AG04449 (cell line): ENCODE measurements at regions of chr15 and their contacts with region 1.

Region 1: GRCh38 chr15:38563723-38564519 is 693 bp downstream of the RASGRP1 start:
- DNase-seq: no peak
- H3K4me3 ChIP-seq: peak overlapping the region; percentile 64
- CTCF ChIP-seq: peak; percentile 97

Region 2: DNA sequence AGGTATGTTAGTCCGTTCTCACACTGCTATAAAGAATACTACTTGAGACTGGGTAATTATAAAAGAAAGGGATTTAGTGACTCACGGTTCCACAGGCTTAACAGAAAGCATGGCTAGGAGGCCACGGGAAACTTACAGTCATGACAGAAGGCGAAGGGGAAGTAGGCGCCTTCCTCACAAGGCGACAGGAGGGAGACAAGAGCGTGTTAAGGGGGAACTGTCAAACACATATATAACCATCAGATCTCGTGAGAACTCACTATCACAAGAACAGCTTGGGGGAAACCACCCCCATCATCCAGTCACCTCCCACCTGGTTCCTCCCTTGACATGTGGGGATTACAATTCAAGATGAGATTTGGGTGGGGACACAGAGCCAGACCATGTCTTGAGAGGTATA is 280.9 kb before region 1 on chr15:
- CTCF ChIA-PET with region 1: no interaction called
- POLR2A ChIA-PET with region 1: no interaction called
- DNase-seq: no peak
- H3K4me3 ChIP-seq: no peak overlapping the region
- CTCF ChIP-seq: no peak

Region 3: GRCh38 chr15:38414357-38414756 is 149.6 kb before region 1 on chr15:
- CTCF ChIA-PET with region 1: no interaction called
- POLR2A ChIA-PET with region 1: no interaction called
- DNase-seq: peak; percentile 12
- H3K4me3 ChIP-seq: no peak overlapping the region
- CTCF ChIP-seq: peak; percentile 84

Region 4: DNA sequence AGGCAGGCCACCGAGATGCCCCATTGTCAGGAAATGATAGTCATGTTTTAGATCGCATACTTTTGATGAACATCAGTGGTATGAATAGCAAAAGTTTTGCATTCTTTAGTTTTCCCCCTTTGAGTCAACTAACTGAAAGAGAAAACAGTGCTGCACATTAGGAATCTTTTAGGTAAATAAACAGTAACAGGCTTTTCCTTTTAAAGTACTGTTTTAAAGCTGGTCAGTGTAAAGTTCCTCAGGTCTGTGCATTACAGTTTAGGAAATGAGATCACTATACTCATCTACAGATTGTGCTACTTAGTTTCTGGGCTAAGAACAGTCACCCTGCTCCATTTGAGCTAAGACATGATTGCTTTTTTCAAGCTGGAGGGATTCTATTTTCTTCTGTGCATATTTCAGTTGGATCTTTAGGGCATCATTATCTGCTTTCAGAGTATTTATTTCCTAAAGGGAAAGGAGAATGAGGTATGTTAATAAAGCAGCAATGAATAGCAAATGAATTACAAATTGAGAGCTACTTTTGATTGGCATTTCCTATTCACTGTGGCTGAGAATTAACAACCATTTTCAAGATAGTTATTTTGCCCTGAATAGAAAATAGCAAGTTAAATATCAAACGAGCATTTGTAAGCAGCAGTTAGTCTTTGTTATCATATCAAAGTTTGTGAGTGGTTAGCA is 73.5 kb before region 1 on chr15:
- CTCF ChIA-PET with region 1: interaction called, 18 read pairs
- POLR2A ChIA-PET with region 1: interaction called, 3 read pairs
- DNase-seq: peak; percentile 80
- H3K4me3 ChIP-seq: no peak overlapping the region
- CTCF ChIP-seq: no peak

Region 5: DNA sequence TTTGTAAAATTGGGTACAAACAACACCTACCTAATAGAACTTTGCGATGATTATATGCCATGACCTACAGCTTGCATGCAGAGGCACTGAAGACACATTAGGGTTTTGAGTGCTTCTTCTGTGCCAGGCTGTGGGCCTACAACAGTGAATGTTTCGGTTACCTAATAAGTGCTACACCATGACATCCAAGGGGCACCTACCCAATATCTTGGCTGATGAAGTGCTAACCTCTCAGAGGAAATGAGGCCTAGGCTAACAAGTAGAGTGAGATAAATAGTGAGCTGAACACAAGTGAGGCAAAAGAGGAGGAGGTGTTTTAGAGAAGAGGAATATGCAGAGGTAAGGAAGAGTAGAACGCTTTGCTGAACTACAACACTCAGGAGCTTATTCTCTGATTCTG is 12.9 kb after region 1 on chr15:
- CTCF ChIA-PET with region 1: interaction called, 30 read pairs
- POLR2A ChIA-PET with region 1: no interaction called
- DNase-seq: no peak
- H3K4me3 ChIP-seq: no peak overlapping the region
- CTCF ChIP-seq: no peak

Region 6: GRCh38 chr15:38647683-38648082 is 83.8 kb after region 1 on chr15:
- CTCF ChIA-PET with region 1: interaction called, 28 read pairs
- POLR2A ChIA-PET with region 1: no interaction called
- DNase-seq: no peak
- H3K4me3 ChIP-seq: no peak overlapping the region
- CTCF ChIP-seq: peak; percentile 27

Region 7: DNA sequence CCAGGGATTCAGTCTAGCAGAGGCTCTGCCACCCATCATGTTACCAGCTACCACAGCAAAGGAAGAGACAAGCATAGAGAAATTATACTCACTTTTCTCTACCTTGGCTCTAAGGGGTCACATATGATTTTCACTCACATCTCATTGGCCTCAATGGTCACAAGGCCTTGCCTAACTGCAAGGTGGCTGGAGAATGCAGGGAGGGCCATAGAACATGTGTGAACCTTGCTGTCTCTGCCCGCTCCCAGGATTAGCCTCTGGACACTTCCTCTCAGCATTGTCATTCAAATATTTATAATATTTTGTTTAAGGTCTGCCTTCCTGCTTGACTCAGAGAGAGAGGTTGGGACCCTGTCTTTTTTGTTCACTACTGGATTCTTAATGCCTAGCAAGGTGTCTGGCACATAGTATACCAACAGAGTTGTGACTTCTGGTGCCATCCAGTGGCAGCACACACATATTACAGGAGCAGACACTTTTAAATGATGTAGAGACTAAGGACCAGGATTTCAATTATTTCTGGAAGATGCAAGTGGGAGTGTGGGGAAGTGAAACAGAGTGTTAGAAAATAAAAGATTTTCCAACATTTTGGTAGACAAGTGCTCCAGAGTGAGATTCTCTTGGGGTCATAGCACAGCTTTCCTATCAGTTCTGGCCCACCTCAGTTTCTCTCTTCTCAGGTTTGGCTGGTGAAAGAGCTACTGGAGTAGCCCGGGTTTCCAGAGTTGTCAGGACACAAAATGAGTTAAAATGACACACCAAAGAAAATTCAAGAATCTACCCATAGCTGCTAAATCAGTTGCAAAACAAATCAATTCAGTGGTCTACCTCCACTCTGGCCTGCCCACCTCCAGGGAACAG is 119.7 kb after region 1 on chr15:
- CTCF ChIA-PET with region 1: interaction called, 40 read pairs
- POLR2A ChIA-PET with region 1: interaction called, 3 read pairs
- DNase-seq: no peak
- H3K4me3 ChIP-seq: no peak overlapping the region
- CTCF ChIP-seq: peak; percentile 65

Region 8: DNA sequence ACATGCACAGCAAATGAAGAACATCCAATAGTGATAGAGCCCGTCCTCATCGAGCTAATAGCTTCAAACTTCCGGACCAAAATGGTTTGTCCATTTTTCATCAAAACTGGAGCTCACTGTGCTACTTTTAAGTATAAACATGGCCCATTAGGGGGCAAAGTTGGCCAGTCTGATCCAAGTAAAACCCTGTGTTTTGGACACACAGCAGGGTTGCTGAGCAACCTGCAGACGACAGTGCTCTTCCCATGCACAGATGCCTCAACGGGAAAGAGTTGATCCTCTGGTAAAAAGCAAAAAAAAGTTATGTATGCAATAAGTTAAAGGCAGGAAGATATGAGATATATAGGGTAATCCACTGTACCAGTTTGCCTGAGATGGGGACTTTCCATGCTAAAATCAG is 773.0 kb after region 1 on chr15:
- CTCF ChIA-PET with region 1: no interaction called
- POLR2A ChIA-PET with region 1: no interaction called
- DNase-seq: no peak
- H3K4me3 ChIP-seq: no peak overlapping the region
- CTCF ChIP-seq: no peak